ENCODE measurements at regions of chr17 and their contacts with region 1.

Region 1: GRCh38 chr17:74776044-74776977 is at the start of gene NAT9:
- DNase-seq: peak; percentile 98
- H3K4me3 ChIP-seq: peak within 1 kb of the TSS; percentile 49 to 85 (median 75)
- H3K27ac ChIP-seq: peak within 1 kb of the TSS; percentile 65
- H3K4me1 ChIP-seq: peaks cover 7% of the 10 kb centered on the region
- H3K27me3 ChIP-seq: no peaks in the 10 kb centered on the region
- CTCF ChIP-seq: no peak
- POLR2A ChIP-seq: peak; percentile 47
- total RNA-seq, gene NAT9: 44.8 and 45.8 TPM in 2 replicates

Region 2: DNA sequence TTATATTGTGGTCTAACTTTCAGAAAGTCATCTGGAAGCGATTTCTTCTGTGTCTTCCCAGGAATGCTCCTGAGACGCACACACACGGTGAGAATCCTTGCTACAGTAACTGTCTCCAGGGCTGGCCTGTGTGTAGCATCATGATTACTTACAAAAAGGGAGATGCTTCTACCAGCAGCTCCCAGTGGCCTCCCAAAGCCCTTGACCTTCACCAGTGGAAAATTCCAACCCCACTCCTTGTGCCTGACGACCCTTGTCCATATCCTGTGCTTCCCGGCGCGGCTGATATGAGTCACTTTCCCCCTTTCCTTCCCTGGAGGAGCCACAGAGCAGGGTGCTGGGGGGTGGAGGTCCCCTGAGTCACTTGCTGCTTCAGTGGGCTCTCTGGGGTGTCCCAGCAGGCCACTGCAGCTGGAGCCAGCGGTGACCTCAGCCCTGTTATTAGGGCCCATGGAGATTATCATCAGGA is 22.0 kb after region 1 on chr17:
- CTCF ChIA-PET with region 1: no interaction called
- POLR2A ChIA-PET with region 1: interaction called, 10 read pairs
- dilution Hi-C with region 1: no loop called
- intact Hi-C with region 1: no loop called
- DNase-seq: peak; percentile 83
- H3K4me3 ChIP-seq: no peak overlapping the region
- H3K27ac ChIP-seq: peak overlapping the region; percentile 21
- H3K4me1 ChIP-seq: peaks cover 24% of the 10 kb centered on the region
- H3K27me3 ChIP-seq: no peaks in the 10 kb centered on the region
- CTCF ChIP-seq: no peak
- POLR2A ChIP-seq: no peak

Region 3: GRCh38 chr17:74873038-74873873 is 96.9 kb after region 1 on chr17:
- CTCF ChIA-PET with region 1: interaction called, 3 read pairs
- POLR2A ChIA-PET with region 1: interaction called, 8 read pairs
- dilution Hi-C with region 1: no loop called
- intact Hi-C with region 1: loop called (anchors 5 kb)
- DNase-seq: peak; percentile 100
- H3K4me3 ChIP-seq: peak overlapping the region; percentile 67 to 83 (median 70)
- H3K27ac ChIP-seq: peak overlapping the region; percentile 75
- H3K4me1 ChIP-seq: peaks cover 25% of the 10 kb centered on the region
- H3K27me3 ChIP-seq: no peaks in the 10 kb centered on the region
- CTCF ChIP-seq: no peak
- POLR2A ChIP-seq: peak; percentile 88

Region 4: DNA sequence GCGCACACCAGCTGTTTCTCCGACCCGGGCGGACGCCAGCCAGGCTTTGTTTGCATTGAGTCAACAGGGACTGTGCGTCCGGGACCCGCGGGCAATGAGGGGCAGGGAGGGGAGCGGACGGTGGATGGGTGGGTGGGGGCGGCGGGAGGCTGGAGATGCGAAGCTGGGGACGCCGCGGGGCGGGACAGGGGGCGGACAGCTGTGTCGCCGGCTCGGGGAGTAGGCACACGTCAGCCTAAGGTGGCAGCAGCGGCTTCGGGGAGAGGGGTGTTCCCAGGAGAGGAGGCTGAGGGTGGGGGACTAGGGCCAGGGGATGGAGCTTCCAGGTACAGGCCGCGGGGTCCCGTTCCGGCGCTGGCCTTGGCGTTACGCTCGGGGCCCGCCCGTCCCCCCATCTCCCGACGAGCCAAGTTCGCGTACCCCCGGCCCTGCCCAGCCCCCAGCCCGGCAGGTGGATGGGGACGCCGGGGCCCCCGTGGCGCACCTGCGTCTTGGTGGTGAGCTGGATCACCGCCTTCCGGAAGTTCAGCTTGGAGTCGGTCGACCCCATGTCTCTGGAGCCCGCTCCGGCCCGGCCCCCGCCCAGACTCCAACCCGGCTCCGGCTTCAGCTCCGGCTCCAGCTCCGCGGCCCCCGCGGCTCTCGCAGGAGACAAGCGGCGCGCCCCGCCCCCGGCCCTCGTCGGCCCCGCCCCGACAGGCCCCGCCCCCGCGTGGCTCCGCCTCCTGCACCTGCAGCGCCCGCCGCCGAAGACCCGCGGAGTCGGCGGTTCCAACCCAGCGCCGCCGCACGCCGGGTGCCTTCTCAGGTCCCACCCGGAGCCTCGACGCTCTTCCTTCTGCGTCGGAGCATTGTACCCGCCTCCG is 196.0 kb after region 1 on chr17 and contains the start of gene HID1:
- CTCF ChIA-PET with region 1: no interaction called
- POLR2A ChIA-PET with region 1: no interaction called
- dilution Hi-C with region 1: no loop called
- intact Hi-C with region 1: no loop called
- DNase-seq: peak; percentile 39
- H3K4me3 ChIP-seq: peak within 1 kb of the TSS; percentile 51 to 89 (median 74)
- H3K27ac ChIP-seq: no peak within 1 kb of the TSS
- H3K4me1 ChIP-seq: peaks cover 17% of the 10 kb centered on the region
- H3K27me3 ChIP-seq: peaks cover 5% of the 10 kb centered on the region in 2 experiments
- CTCF ChIP-seq: no peak
- POLR2A ChIP-seq: no peak
- total RNA-seq, gene HID1: 36.8 and 41.4 TPM in 2 replicates

Measured in endothelial cell of umbilical vein (primary cell).